ENCODE measurements at regions of chr17 and their contacts with region 1.

Region 1: GRCh38 chr17:17041571-17042380 is 481 bp upstream of the MPRIP start:
- DNase-seq: peak; percentile 100
- H3K4me3 ChIP-seq: peak overlapping the region; percentile 81
- H3K27ac ChIP-seq: peak overlapping the region; percentile 90
- H3K4me1 ChIP-seq: peaks cover 60% of the 10 kb centered on the region
- H3K27me3 ChIP-seq: no peaks in the 10 kb centered on the region
- CTCF ChIP-seq: no peak

Region 2: GRCh38 chr17:16568541-16569357 is 473.0 kb before region 1 on chr17 and contains the start of gene ZNF287:
- intact Hi-C with region 1: no loop called
- DNase-seq: peak; percentile 96
- H3K4me3 ChIP-seq: peak within 1 kb of the TSS; percentile 92
- H3K27ac ChIP-seq: peak within 1 kb of the TSS; percentile 91
- H3K4me1 ChIP-seq: peaks cover 14% of the 10 kb centered on the region
- H3K27me3 ChIP-seq: no peaks in the 10 kb centered on the region
- CTCF ChIP-seq: no peak
- total RNA-seq, gene ZNF287: 9.9 TPM

Region 3: GRCh38 chr17:16945663-16946218 is 96.0 kb before region 1 on chr17:
- intact Hi-C with region 1: no loop called
- DNase-seq: no peak
- H3K4me3 ChIP-seq: no peak overlapping the region
- H3K27ac ChIP-seq: no peak overlapping the region
- H3K4me1 ChIP-seq: no peaks in the 10 kb centered on the region
- H3K27me3 ChIP-seq: peaks cover 40% of the 10 kb centered on the region
- CTCF ChIP-seq: no peak

Region 4: GRCh38 chr17:17098426-17099179 is 56.8 kb after region 1 on chr17:
- intact Hi-C with region 1: loop called (anchors 10 kb)
- DNase-seq: peak; percentile 71
- H3K4me3 ChIP-seq: peak overlapping the region; percentile 19
- H3K27ac ChIP-seq: peak overlapping the region; percentile 84
- H3K4me1 ChIP-seq: peaks cover 99% of the 10 kb centered on the region
- H3K27me3 ChIP-seq: no peaks in the 10 kb centered on the region
- CTCF ChIP-seq: no peak

Region 5: DNA sequence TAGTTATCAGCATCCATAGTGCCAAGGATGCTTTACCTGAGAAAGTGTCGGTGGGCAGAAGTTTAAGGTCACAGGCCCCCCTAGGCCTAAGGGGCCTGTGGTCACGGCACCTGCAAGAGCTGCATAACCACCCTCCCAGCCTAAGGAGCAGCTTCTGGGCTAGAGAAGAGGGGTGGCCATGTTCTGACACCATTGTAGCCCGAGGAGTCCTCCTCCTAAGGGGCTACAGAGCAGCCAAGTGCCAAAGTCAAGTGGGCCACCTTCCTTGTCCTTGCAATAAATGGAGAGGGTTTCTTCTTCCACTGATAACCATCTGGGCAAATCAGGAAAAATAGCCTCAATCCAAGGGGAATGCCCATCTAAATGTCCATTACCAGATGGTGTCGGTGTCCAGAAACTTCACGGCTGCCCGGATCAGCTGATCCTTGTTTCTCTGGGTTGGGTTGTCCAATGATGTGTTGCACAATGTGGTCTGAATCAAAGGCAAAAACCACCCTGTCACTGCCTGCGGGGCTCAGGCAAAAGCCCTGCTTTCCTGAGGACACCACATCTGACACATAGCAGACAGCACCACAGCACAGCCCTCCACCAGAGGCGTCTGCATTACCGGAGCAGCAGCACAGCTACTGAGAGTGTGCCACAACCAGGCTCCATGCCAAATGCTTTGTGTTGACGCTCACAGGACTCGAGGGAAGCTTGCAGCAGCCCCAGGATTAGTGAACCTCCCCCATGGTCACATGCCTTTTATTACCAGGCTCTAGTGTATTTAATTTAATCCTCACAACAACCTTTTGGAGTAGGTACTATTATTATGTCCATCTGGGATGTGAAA is 984.4 kb after region 1 on chr17:
- intact Hi-C with region 1: no loop called
- DNase-seq: peak; percentile 56
- H3K4me3 ChIP-seq: no peak overlapping the region
- H3K27ac ChIP-seq: peak overlapping the region; percentile 90
- H3K4me1 ChIP-seq: peaks cover 53% of the 10 kb centered on the region
- H3K27me3 ChIP-seq: no peaks in the 10 kb centered on the region
- CTCF ChIP-seq: no peak

Measured in left ventricle myocardium inferior (tissue), 1 donor.